ENCODE measurements at regions of chr9 and their contacts with region 1.

Region 1: GRCh38 chr9:85610074-85610860 is 131.5 kb downstream of the AGTPBP1 start:
- DNase-seq: peak; percentile 12
- ATAC-seq: peak; percentile 82
- H3K4me3 Mint-ChIP-seq: no peak overlapping the region
- H3K27ac Mint-ChIP-seq: no peak overlapping the region
- H3K4me1 Mint-ChIP-seq: peaks cover 4% of the 10 kb centered on the region; the same call in 1 of the 2 replicates
- H3K27me3 Mint-ChIP-seq: no peaks in the 10 kb centered on the region
- CTCF ChIP-seq: no peak; the same call in 1 of the 2 replicates

Region 2: GRCh38 chr9:85332487-85332886 is 277.8 kb before region 1 on chr9:
- CTCF ChIA-PET with region 1: interaction called, 11 read pairs
- POLR2A ChIA-PET with region 1: no interaction called
- DNase-seq: peak; percentile 41
- ATAC-seq: peak; percentile 100
- H3K4me3 Mint-ChIP-seq: no peak overlapping the region
- H3K27ac Mint-ChIP-seq: no peak overlapping the region
- H3K4me1 Mint-ChIP-seq: no peaks in the 10 kb centered on the region
- H3K27me3 Mint-ChIP-seq: no peaks in the 10 kb centered on the region
- CTCF ChIP-seq: no peak; the same call in 1 of the 2 replicates

Region 3: GRCh38 chr9:85368781-85369180 is 241.5 kb before region 1 on chr9:
- CTCF ChIA-PET with region 1: no interaction called
- POLR2A ChIA-PET with region 1: no interaction called
- DNase-seq: no peak
- ATAC-seq: no peak
- H3K4me3 Mint-ChIP-seq: no peak overlapping the region
- H3K27ac Mint-ChIP-seq: no peak overlapping the region
- H3K4me1 Mint-ChIP-seq: no peaks in the 10 kb centered on the region
- H3K27me3 Mint-ChIP-seq: no peaks in the 10 kb centered on the region
- CTCF ChIP-seq: no peak

Region 4: GRCh38 chr9:85508616-85509015 is 101.7 kb before region 1 on chr9:
- CTCF ChIA-PET with region 1: interaction called, 19 read pairs
- POLR2A ChIA-PET with region 1: no interaction called
- DNase-seq: no peak
- ATAC-seq: peak; percentile 87
- H3K4me3 Mint-ChIP-seq: no peak overlapping the region
- H3K27ac Mint-ChIP-seq: no peak overlapping the region
- H3K4me1 Mint-ChIP-seq: peaks cover 6% of the 10 kb centered on the region; the same call in 1 of the 2 replicates
- H3K27me3 Mint-ChIP-seq: peaks cover 4% of the 10 kb centered on the region; the same call in 1 of the 2 replicates
- CTCF ChIP-seq: no peak

Measured in WTC11 (cell line).